PC-9 (cell line): ENCODE measurements at regions of chr12 and their contacts with region 1.

Region 1: GRCh38 chr12:15899282-15899870 is 11.8 kb upstream of the DERA start:
- DNase-seq: peak in 1 of 2 experiments; percentile 38
- H3K4me3 ChIP-seq: no peak overlapping the region
- H3K27ac ChIP-seq: no peak overlapping the region; the same call in 1 of the 2 replicates
- H3K4me1 ChIP-seq: no peaks in the 10 kb centered on the region
- H3K27me3 ChIP-seq: no peaks in the 10 kb centered on the region
- CTCF ChIP-seq: peak; percentile 86

Region 2: GRCh38 chr12:15590180-15590826 is 309.1 kb before region 1 on chr12:
- CTCF ChIA-PET with region 1: no interaction called
- POLR2A ChIA-PET with region 1: no interaction called
- intact Hi-C with region 1: loop called (anchors 1 kb)
- DNase-seq: peak; percentile 55 to 64
- H3K4me3 ChIP-seq: peak overlapping the region; percentile 35; the same call in 1 of the 2 replicates
- H3K27ac ChIP-seq: no peak overlapping the region
- H3K4me1 ChIP-seq: peaks cover 8% of the 10 kb centered on the region; the same call in 1 of the 2 replicates
- H3K27me3 ChIP-seq: no peaks in the 10 kb centered on the region
- CTCF ChIP-seq: peak; percentile 92

Region 3: DNA sequence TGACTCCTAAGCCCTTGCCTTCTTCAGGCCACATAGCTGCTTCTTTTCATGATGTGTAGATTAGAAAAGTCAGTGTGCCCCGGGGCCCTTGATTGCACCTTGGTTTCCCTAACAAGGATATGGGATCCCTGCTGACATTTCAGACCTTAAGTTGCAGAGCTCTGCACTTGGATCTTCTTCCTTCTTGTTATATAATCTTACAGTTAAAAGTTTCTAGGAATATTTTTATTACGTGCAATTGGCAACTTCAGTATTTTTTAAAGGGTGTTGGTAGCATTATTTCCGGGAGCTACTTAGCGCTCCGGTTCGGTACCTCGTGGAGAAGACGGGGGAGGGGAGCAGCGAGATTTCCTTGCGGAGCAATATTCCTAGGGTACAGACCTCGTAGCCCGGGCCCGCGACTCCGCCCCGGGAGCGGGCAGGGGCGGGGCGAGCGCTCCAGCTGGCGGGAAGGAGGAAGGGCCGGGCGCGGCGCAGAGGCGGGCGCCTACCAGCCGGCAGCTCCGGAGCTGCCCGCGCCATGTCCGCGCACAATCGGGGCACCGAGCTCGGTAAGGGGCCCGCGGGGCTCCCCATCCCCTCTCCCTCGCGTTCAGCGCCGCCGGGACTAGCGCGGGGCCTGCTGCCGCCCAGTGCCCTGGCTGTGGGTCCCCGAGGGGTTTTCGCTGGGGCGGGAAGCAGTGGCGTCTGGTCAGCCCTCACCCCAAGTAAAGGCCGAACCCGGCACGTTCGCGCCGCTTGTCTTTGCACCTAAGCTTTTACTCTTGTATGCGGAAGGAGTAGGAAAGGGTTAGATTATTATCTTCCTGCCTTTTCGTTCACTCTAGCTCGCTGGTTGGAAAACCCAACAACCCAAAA is 11.7 kb after region 1 on chr12 and contains the start of gene DERA:
- CTCF ChIA-PET with region 1: interaction called, 3 read pairs
- POLR2A ChIA-PET with region 1: interaction called, 12 read pairs
- intact Hi-C with region 1: no loop called
- DNase-seq: peak; percentile 64 to 92
- H3K4me3 ChIP-seq: peak within 1 kb of the TSS; percentile 80
- H3K27ac ChIP-seq: peak within 1 kb of the TSS; percentile 82
- H3K4me1 ChIP-seq: peaks cover 17% of the 10 kb centered on the region
- H3K27me3 ChIP-seq: no peaks in the 10 kb centered on the region
- CTCF ChIP-seq: 0 out of 2 replicates have a peak, but pooled peaks have one; percentile 19
- total RNA-seq, gene DERA: 67.3 and 67.6 TPM in 2 replicates